PC-9 (cell line): ENCODE measurements at regions of chr4 and their contacts with region 1.

Region 1: DNA sequence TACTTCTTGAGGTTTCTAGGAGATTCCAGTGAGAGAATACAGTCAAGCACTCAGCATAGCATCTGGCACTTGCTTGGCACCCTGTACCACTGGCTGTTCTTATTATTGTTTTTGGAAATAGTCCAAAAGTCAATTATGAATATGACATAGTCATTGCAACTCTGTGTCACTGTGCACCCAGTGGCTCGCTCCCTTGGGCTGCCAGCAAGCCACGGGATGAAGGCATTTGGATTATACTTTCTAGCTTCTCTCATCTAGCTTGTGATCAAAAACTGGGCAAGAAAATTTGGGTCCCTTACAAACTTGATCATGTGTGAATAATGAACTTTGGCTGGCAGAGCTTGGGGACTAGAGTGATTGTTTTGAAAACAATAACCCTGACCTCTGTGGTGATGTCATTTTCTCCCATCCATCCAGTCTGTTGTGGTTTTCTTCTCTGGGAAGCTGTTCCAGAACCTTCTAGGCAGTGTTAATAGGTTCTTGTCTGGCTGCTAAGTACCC is 32.7 kb upstream of the LIMCH1 start:
- DNase-seq: peak in 1 of 2 experiments; percentile 31
- H3K4me3 ChIP-seq: no peak overlapping the region
- H3K27ac ChIP-seq: no peak overlapping the region
- H3K4me1 ChIP-seq: no peaks in the 10 kb centered on the region; the same call in 1 of the 2 replicates
- H3K27me3 ChIP-seq: no peaks in the 10 kb centered on the region
- CTCF ChIP-seq: no peak

Region 2: GRCh38 chr4:41318867-41319535 is 186.2 kb before region 1 on chr4:
- CTCF ChIA-PET with region 1: interaction called, 3 read pairs
- POLR2A ChIA-PET with region 1: interaction called, 11 read pairs
- intact Hi-C with region 1: loop called (anchors 1 kb)
- DNase-seq: peak; percentile 74 to 98
- H3K4me3 ChIP-seq: no peak overlapping the region; the same call in 1 of the 2 replicates
- H3K27ac ChIP-seq: peak overlapping the region; percentile 98
- H3K4me1 ChIP-seq: peaks cover 72% of the 10 kb centered on the region
- H3K27me3 ChIP-seq: no peaks in the 10 kb centered on the region
- CTCF ChIP-seq: no peak

Region 3: DNA sequence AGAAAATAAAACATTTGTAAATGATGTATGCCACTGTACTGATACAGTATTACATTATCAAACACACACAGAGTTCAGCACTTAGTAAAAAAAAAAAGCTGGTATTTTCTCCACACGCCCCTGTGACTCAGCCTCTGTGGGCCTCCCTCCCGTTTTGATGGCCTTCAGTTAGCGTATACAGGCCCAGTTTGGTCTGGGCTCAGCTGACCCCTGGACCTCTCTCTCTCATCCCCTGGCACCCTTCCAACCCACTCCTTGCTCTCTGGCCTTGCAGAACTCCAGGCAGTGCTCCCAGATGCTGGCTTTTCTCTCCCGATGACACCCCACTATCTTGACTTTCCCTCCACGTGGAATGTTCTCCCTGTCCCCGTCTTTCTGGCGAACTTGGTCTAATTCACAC is 56.3 kb before region 1 on chr4:
- CTCF ChIA-PET with region 1: interaction called, 24 read pairs
- POLR2A ChIA-PET with region 1: no interaction called
- intact Hi-C with region 1: no loop called
- DNase-seq: no peak
- H3K4me3 ChIP-seq: no peak overlapping the region
- H3K27ac ChIP-seq: no peak overlapping the region
- H3K4me1 ChIP-seq: no peaks in the 10 kb centered on the region; the same call in 1 of the 2 replicates
- H3K27me3 ChIP-seq: no peaks in the 10 kb centered on the region
- CTCF ChIP-seq: no peak

Region 4: GRCh38 chr4:41525129-41525528 is 19.9 kb after region 1 on chr4:
- CTCF ChIA-PET with region 1: no interaction called
- POLR2A ChIA-PET with region 1: no interaction called
- intact Hi-C with region 1: loop called (anchors 1 kb)
- DNase-seq: peak; percentile 66 to 97
- H3K4me3 ChIP-seq: no peak overlapping the region
- H3K27ac ChIP-seq: peak overlapping the region; percentile 97
- H3K4me1 ChIP-seq: peaks cover 42% of the 10 kb centered on the region
- H3K27me3 ChIP-seq: no peaks in the 10 kb centered on the region
- CTCF ChIP-seq: no peak

Region 5: DNA sequence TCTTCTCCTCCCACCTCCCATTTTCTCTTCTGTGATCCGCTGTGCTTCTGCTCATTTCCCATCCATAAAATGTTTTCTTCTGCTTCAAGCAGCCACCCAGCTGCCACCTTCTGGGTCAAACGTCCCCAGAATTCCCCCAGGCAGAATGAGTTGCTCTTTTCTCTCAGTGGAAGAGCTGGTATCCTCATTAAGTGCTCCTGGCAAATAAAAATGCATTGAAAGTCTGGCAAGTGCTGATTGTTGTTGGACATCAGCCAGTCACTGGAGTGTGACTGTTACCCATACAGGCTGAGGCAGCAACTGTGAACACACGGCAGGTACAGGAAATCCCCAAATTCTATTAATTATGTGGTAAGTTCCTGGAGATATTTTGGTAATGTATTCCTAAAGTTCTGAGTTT is 85.4 kb after region 1 on chr4:
- CTCF ChIA-PET with region 1: interaction called, 10 read pairs
- POLR2A ChIA-PET with region 1: no interaction called
- intact Hi-C with region 1: no loop called
- DNase-seq: peak; percentile 43 to 70
- H3K4me3 ChIP-seq: no peak overlapping the region
- H3K27ac ChIP-seq: peak overlapping the region; percentile 74
- H3K4me1 ChIP-seq: peaks cover 23% of the 10 kb centered on the region
- H3K27me3 ChIP-seq: no peaks in the 10 kb centered on the region
- CTCF ChIP-seq: no peak